ENCODE measurements at regions of chr12 and their contacts with region 1.

Region 1: DNA sequence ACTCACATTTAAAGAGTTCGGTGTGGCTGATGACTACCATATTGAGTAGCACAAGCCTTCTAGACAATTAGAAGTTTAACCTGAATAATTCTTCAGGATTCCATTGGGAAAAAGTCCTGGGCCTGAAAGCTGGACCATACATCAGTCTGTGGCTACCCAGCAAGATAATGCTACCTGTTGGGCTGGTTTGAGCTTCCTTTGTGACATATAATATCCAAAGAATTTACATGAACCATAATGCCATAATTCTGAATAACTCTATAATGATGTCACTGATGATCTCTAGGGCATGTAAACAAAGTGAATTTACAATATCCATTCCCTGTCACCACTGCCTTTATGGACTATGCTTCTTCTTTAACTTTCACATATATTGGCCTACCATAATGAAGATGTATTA is 3.8 kb upstream of the YBX3 start:
- DNase-seq: no peak
- H3K4me3 ChIP-seq: no peak overlapping the region
- H3K27ac ChIP-seq: no peak overlapping the region
- H3K4me1 ChIP-seq: peaks cover 0 to 7% (median 2%) of the 10 kb centered on the region in 4 donors
- H3K27me3 ChIP-seq: peaks cover 0 to 3% of the 10 kb centered on the region in 2 donors
- CTCF ChIP-seq: no peak

Region 2: GRCh38 chr12:9391815-9392214 is 1335.1 kb before region 1 on chr12:
- intact Hi-C with region 1: no loop called
- DNase-seq: no peak
- H3K4me3 ChIP-seq: no peak overlapping the region
- H3K27ac ChIP-seq: no peak overlapping the region
- H3K4me1 ChIP-seq: no peaks in the 10 kb centered on the region
- H3K27me3 ChIP-seq: no peaks in the 10 kb centered on the region
- CTCF ChIP-seq: no peak

Region 3: DNA sequence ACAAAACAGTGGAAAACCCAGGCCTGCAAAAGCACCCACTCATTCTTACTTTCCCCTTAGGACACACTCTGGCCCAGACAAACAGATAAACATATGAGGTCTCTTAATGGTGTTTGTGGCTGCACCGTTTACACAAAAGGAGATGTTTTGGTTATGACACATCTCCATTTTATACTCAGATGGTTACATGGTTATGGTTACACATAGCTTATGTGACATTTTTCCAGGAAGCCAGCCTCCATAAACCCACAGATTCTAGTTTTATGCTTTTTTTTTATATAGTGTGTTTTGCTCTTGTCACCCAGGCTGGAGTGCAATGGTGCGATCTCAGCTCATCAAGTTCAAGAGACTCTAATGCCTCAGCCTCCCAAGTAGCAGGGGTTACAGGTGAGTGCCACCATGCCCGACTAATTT is 422.8 kb before region 1 on chr12:
- intact Hi-C with region 1: no loop called
- DNase-seq: no peak
- H3K4me3 ChIP-seq: no peak overlapping the region
- H3K27ac ChIP-seq: no peak overlapping the region
- H3K4me1 ChIP-seq: no peaks in the 10 kb centered on the region
- H3K27me3 ChIP-seq: no peaks in the 10 kb centered on the region
- CTCF ChIP-seq: no peak

Region 4: DNA sequence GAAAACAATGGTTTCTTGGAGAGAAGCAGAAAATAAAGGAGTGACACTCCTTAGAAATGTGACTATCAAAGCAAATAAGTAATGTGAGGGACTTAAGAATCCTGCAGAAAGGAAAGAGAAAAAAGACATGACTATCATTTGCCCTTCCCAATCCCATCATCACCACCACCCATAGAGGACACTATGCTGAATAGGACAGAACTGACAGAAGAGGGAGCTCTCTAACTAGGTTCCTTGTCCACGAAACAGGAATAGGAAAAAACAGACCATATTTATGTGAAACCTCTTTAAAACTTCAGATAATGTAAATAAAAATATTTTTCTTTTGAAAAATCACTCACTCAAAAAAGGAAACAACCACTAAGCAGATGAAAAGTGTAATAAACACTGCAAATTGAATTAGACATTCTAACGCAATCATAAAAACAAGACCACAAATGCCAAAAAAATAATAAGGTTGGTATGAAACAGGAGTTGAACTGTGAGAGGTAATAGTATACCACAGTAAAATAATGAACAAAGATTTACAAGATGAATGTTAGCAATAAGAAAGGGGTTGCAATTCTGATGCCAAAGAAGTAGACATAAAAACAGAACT is 395.2 kb before region 1 on chr12:
- intact Hi-C with region 1: no loop called
- DNase-seq: no peak
- H3K4me3 ChIP-seq: no peak overlapping the region
- H3K27ac ChIP-seq: no peak overlapping the region
- H3K4me1 ChIP-seq: no peaks in the 10 kb centered on the region
- H3K27me3 ChIP-seq: no peaks in the 10 kb centered on the region
- CTCF ChIP-seq: peak; percentile 54 to 60

Region 5: GRCh38 chr12:10521555-10521954 is 205.4 kb before region 1 on chr12:
- intact Hi-C with region 1: no loop called
- DNase-seq: no peak
- H3K4me3 ChIP-seq: no peak overlapping the region
- H3K27ac ChIP-seq: no peak overlapping the region
- H3K4me1 ChIP-seq: no peaks in the 10 kb centered on the region
- H3K27me3 ChIP-seq: no peaks in the 10 kb centered on the region
- CTCF ChIP-seq: no peak

Region 6: DNA sequence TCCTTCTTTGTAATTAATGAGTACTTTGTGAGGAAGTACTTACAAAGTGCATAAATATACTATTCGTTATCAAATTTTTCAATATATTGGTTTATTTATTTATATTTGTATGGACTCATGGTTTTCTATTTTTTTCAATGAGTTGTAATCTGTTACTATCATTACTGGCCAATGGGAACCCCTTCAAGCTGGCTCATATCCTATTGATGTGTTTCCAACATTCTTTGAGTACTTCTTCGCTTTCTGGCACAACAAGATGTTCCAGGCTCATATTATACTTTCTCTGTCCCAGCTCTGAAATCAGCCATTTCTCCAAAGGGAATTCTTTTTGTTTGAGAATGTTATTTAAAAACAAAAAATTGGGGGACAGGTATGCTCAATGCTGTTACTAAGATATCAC is 21.3 kb before region 1 on chr12:
- intact Hi-C with region 1: loop called (anchors 1 kb)
- DNase-seq: no peak
- H3K4me3 ChIP-seq: no peak overlapping the region
- H3K27ac ChIP-seq: peak overlapping the region in 1 of 2 donors; percentile 11
- H3K4me1 ChIP-seq: peaks cover 0 to 29% (median 13%) of the 10 kb centered on the region in 4 donors
- H3K27me3 ChIP-seq: no peaks in the 10 kb centered on the region
- CTCF ChIP-seq: no peak

Region 7: DNA sequence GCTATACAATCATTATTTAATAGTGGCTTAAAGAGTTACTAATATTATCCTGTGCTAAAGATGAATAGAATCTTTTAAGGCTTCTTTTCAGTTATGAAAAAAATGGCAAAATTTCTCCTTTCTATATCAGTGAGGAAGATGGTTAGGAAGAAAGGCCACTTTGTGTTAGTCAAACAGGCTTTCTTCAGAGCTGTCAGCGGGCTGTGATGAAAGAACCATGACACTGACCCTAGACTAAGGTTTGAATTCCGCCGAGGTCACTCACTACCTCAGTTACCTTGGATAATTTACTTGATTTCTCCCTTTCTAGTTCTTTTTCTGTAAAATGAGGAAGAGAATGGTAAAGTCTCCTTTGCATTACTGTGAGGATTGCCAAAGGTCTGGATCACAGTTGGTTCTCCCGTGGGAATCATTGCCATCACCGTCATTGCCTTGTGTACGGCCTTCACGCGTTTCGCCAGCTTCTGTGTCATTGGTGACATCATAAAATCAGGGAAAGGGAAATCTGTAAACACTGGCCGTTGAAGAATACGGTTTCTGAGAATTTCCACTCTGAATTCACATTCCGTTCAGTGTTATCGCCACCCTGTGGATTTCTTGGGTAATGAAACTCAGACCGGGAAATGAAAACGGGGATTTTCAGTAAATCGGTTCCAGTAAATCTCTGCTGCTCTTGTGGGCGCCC is 22.9 kb after region 1 on chr12:
- intact Hi-C with region 1: loop called (anchors 2 kb)
- DNase-seq: peak; percentile 84
- H3K4me3 ChIP-seq: peak overlapping the region; percentile 28 to 40
- H3K27ac ChIP-seq: peak overlapping the region; percentile 53 to 59
- H3K4me1 ChIP-seq: peaks cover 0 to 10% (median 0%) of the 10 kb centered on the region in 4 donors
- H3K27me3 ChIP-seq: peaks cover 0 to 7% of the 10 kb centered on the region in 2 donors
- CTCF ChIP-seq: peak; percentile 88